ENCODE measurements at regions of chr5 and their contacts with region 1.

Region 1: GRCh38 chr5:95961617-95962474 is at the start of gene ELL2:
- DNase-seq: peak; percentile 99
- H3K4me3 Mint-ChIP-seq: peak within 1 kb of the TSS; percentile 98
- H3K27ac Mint-ChIP-seq: peak within 1 kb of the TSS; percentile 99
- H3K4me1 Mint-ChIP-seq: peaks cover 47% of the 10 kb centered on the region
- H3K27me3 Mint-ChIP-seq: no peaks in the 10 kb centered on the region
- total RNA-seq, gene ELL2: 103 and 111 TPM in 2 replicates

Region 2: DNA sequence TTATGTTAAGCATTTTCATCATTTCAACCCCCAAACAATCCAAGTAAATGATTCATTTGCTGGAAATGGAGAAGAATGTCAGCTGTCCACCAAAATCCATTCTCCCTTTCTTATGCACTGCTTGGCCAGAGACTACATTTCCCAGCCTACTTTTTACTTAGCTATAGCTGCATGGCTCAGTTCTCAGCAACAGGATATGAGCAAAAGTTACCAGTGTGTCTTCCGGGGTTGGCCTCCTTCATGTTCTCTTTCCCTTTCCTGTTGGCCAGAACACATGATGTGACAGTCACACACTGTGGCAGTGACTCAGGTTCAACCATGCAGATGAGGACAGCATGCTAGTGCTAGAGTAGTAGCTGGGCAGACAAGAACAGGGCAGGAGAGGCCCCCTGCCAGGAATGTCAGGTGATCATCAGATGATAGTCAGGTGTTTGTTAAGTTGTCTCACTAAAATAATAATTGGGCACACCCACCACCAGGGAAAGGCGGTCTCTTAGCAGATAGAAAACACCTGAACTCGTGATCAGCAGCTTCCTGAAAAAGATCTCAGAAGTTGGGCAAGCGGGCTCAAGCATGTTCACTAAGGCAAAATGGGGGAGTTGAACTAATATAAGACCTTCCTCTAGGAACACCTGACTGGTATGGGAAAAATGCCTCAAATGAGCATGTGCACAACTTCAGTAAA is 329.7 kb before region 1 on chr5:
- intact Hi-C with region 1: loop called (anchors 5 kb)
- DNase-seq: peak; percentile 88
- H3K4me3 Mint-ChIP-seq: peak overlapping the region; percentile 28
- H3K27ac Mint-ChIP-seq: peak overlapping the region; percentile 92
- H3K4me1 Mint-ChIP-seq: peaks cover 14% of the 10 kb centered on the region
- H3K27me3 Mint-ChIP-seq: peaks cover 9% of the 10 kb centered on the region

Region 3: GRCh38 chr5:95892780-95893354 is 69.0 kb before region 1 on chr5:
- intact Hi-C with region 1: loop called (anchors 5 kb)
- DNase-seq: peak; percentile 82
- H3K4me3 Mint-ChIP-seq: no peak overlapping the region
- H3K27ac Mint-ChIP-seq: no peak overlapping the region
- H3K4me1 Mint-ChIP-seq: peaks cover 16% of the 10 kb centered on the region
- H3K27me3 Mint-ChIP-seq: no peaks in the 10 kb centered on the region

Region 4: GRCh38 chr5:96067894-96068614 is 106.2 kb after region 1 on chr5:
- intact Hi-C with region 1: loop called (anchors 1 kb)
- DNase-seq: peak; percentile 65
- H3K4me3 Mint-ChIP-seq: peak overlapping the region; percentile 40
- H3K27ac Mint-ChIP-seq: peak overlapping the region; percentile 90
- H3K4me1 Mint-ChIP-seq: peaks cover 59% of the 10 kb centered on the region
- H3K27me3 Mint-ChIP-seq: no peaks in the 10 kb centered on the region

Region 5: DNA sequence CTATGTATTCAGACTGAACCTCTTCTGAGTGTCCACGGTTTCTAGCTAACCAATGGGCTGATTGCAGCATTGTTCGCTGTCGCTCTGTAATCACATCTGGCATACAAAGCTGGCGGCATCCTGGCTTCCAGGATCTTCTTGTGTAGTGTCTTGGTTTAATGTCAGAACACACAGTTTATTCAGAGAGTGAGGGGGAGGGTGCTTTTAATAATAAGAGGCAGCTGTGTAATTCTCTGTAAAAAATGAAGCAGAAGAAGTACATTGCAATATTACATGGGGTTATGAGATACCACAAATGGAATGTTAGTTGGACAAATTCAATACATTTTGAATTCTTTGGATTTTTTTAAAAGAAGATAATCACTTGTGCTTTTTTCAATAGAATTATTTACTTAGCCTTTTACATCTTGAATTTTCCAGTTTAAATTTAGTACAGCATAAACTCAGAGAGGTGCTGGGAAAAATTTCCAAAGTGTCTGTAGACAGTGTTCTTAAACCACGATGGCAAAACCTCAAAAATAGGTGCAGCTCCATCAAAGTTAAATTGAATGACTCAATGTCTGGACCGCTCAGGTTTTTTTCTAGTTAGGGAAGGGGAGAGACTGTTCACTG is 265.2 kb after region 1 on chr5:
- intact Hi-C with region 1: loop called (anchors 10 kb)
- DNase-seq: no peak
- H3K4me3 Mint-ChIP-seq: no peak overlapping the region
- H3K27ac Mint-ChIP-seq: no peak overlapping the region
- H3K4me1 Mint-ChIP-seq: no peaks in the 10 kb centered on the region
- H3K27me3 Mint-ChIP-seq: peaks cover 7% of the 10 kb centered on the region

Region 6: GRCh38 chr5:96344678-96345577 is 383.1 kb after region 1 on chr5:
- intact Hi-C with region 1: loop called (anchors 2 kb)
- DNase-seq: peak; percentile 79
- H3K4me3 Mint-ChIP-seq: peak overlapping the region; percentile 2
- H3K27ac Mint-ChIP-seq: no peak overlapping the region
- H3K4me1 Mint-ChIP-seq: peaks cover 24% of the 10 kb centered on the region
- H3K27me3 Mint-ChIP-seq: peaks cover 35% of the 10 kb centered on the region

Region 7: DNA sequence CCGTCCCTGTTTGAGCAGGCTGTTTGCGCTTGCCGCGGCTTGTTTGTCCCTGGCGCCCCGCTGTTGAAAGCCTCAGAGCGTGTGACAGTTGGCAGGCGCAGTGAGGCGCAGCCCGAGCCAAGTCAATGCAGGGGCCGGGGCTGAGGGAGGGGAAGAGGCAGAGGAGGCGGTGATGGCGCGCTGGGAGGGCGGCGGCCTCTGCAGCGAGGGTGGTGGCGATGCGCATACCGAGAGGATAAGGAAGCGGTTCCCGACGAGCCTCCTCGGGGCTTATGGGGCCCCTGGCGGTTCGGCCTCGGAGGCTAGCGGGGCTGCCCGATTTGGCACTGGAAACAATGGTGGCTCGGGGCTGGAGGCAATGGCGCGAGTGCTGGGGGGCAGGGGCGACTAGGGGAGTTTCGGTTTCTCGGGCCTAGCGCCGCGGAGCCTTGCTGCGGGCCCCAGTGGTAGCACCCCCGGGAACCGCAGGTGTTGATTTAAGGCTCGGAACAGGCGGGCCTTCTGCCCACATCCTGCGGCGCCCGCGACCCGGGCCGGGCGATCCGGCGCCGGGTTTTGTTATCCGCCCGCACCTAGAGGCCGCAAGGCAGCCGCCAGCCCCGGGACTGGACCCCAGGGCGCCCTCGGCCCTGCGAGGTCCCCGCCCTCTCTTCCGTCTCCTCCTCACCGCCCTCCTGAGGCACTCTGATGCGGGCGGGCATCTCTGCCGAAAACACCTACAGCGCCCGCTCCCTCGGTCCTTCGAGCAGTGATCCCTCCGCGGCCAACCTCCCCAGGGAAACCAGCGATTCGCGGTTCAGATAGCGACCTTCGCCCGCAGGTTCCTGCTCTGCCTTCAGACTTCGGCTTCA is 973.1 kb after region 1 on chr5:
- intact Hi-C with region 1: loop called (anchors 5 kb)
- DNase-seq: peak; percentile 99
- H3K4me3 Mint-ChIP-seq: peak overlapping the region; percentile 81
- H3K27ac Mint-ChIP-seq: peak overlapping the region; percentile 94
- H3K4me1 Mint-ChIP-seq: peaks cover 54% of the 10 kb centered on the region
- H3K27me3 Mint-ChIP-seq: no peaks in the 10 kb centered on the region

Measured in activated CD4-positive, alpha-beta T cell treated with anti-CD3 and anti-CD28 coated beads, Interleukin-2, amount 10 ng/mL, durations not matched to agents 24 days and 14 days (primary cell).